Activated T-helper 1 cell treated with anti-CD3 and anti-CD28 coated beads, Interleukin-12 subunit alpha, Interleukin-12 subunit beta, Interleukin-2, Interleukin-4 antibody, amounts not matched to agents 30 ng/mL and 10 ng/mL and 1 ng/mL, durations not matched to agents 14 hours and 24 hours and 36 hours (primary cell): ENCODE measurements at regions of chr1 and their contacts with region 1.

Region 1: DNA sequence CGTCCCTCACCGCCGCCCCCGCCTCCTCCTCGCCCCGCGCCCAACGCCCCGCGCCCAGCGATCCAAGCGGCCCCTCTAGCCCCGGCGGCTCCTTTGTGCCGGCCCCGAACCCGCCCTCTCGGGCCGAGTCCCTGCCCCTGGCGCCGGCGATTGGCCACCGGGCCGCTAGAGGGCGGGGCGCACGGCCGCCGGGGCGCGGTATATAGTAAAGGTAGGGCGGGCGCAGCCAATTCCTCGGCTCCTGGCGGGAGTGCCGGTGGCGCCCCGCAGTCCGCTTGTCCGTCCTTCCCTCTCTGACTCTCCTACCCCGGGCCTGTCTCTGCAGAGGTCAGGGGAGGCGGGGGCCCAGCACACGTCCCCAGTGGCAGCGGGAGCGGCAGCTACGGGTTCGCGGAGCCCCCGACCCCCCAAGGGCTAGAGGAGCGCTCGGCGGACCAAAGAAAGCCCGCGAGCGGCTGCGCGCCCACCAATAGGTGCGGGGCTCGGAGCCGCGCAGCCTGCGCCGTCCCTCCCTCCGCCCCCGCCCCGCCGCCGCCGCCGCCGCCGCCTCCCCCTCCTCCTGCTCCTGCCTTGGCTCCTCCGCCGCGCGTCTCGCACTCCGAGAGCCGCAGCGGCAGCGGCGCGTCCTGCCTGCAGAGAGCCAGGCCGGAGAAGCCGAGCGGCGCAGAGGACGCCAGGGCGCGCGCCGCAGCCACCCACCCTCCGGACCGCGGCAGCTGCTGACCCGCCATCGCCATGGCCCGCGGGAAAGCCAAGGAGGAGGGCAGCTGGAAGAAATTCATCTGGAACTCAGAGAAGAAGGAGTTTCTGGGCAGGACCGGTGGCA is at the start of gene ATP1B1:
- DNase-seq: peak; percentile 81
- H3K4me3 Mint-ChIP-seq: peak within 1 kb of the TSS; percentile 89
- H3K27ac Mint-ChIP-seq: peak within 1 kb of the TSS; percentile 80
- H3K4me1 Mint-ChIP-seq: peaks cover 51% of the 10 kb centered on the region
- H3K27me3 Mint-ChIP-seq: peaks cover 5% of the 10 kb centered on the region
- total RNA-seq, gene ATP1B1: 12.3 TPM in 2 replicates

Region 2: DNA sequence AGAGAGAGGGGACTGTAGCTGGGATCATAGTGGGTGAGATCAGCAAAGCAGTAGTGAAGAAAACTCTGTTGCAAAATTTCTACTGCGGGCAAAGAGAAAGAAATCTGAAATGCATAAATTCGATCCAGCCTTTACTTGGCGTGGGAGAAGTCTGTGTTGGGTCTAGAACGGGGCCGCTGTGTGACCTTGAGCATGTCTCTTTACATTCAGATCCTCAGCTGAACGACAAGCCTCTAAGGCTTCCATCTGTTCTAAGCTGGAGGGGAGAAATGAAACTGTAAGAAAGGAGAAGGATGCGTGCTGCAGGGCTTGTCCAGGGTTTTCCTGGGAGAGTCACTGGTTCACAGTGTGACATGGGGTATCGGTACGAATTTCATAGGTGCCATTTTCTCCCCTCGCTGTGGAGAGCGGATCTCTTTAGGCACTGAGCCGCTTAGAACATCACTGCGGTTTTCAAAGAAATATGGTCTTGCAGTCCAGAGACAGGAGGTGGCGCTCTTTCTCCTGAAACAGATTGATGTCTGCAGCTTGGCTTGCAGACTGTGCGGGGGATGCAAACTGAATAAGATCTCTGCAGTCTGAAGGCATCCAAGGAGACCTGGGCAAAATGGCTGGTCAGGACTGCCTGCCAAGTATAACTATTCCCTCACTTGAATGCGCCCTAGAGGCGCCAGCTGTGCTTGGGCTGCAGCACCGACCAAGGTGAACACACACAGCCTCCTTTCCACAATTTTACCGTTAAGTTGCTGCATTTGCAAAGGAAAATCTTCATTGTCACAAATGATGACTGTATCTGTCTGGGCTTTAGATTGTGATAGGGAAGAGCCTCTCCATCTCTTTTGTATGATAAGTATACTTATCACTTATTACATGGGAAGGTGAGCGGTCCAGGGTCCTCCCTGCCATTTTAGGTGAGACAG is 666.6 kb before region 1 on chr1:
- intact Hi-C with region 1: loop called (anchors 10 kb)
- DNase-seq: peak; percentile 78
- H3K4me3 Mint-ChIP-seq: peak overlapping the region; percentile 57
- H3K27ac Mint-ChIP-seq: no peak overlapping the region
- H3K4me1 Mint-ChIP-seq: peaks cover 52% of the 10 kb centered on the region
- H3K27me3 Mint-ChIP-seq: no peaks in the 10 kb centered on the region

Region 3: DNA sequence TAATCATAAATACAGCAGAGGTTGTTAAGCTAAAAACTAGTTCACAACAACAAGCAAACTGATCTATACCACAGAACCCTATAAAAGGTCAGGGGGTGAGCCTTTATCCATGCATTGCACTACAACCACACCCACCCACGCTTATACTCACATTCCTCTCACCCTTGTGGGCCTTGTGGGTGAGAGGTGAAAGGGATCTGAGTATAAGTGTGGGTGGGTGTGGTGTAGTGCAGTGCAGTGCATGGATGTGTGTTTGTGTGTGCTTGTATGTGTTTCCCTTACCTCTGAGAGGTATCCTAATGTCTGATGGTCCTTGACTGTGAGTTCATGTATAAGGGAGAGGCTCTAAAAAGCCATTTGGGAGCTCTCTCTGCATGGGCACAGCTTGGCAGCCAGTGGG is 281.9 kb before region 1 on chr1:
- intact Hi-C with region 1: loop called (anchors 5 kb)
- DNase-seq: no peak
- H3K4me3 Mint-ChIP-seq: no peak overlapping the region
- H3K27ac Mint-ChIP-seq: no peak overlapping the region
- H3K4me1 Mint-ChIP-seq: peaks cover 13% of the 10 kb centered on the region
- H3K27me3 Mint-ChIP-seq: peaks cover 6% of the 10 kb centered on the region

Region 4: GRCh38 chr1:169048043-169048442 is 58.3 kb before region 1 on chr1:
- intact Hi-C with region 1: loop called (anchors 2 kb)
- DNase-seq: no peak
- H3K4me3 Mint-ChIP-seq: peak overlapping the region; percentile 23
- H3K27ac Mint-ChIP-seq: peak overlapping the region; percentile 69
- H3K4me1 Mint-ChIP-seq: peaks cover 73% of the 10 kb centered on the region
- H3K27me3 Mint-ChIP-seq: no peaks in the 10 kb centered on the region

Region 5: DNA sequence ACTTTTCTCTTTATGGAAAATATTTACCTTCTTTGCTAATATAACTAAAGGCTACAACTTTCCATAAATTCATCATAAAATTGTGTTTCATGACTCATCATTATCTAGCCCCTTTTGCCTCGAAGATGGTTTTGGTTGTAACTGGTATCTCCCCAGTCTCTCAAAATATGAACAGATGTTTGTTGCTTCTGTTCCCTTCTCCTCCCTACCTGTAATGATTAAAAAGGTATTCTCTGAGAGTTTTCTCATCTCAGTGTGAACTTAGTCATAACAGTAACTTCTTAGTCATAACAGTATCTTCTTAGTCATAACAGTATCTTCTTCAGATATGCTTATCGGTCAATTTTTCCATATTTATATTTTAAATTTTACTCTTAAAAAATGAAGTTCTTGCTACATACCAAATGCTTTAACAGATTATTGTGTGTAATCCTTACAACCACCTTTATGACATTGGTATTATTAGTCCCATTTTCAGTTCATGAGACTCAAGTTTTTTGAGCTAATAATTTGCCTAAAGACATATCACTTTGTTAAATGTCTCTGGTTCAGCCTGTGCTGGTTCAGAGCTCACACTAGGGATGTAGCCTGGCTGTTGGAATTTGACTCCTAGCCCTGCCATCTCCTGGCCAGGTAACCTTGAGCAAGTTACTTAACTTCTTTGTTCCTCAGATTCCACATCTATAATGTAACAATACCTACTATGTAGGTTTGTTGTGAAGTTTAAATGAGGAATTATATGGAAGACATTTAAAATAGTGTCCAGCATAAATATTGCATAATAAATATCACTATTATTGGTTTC is 32.8 kb after region 1 on chr1:
- intact Hi-C with region 1: loop called (anchors 1 kb)
- DNase-seq: no peak
- H3K4me3 Mint-ChIP-seq: no peak overlapping the region
- H3K27ac Mint-ChIP-seq: peak overlapping the region; percentile 80
- H3K4me1 Mint-ChIP-seq: peaks cover 20% of the 10 kb centered on the region
- H3K27me3 Mint-ChIP-seq: peaks cover 4% of the 10 kb centered on the region

Region 6: GRCh38 chr1:169348383-169349036 is 242.2 kb after region 1 on chr1:
- intact Hi-C with region 1: loop called (anchors 5 kb)
- DNase-seq: no peak
- H3K4me3 Mint-ChIP-seq: no peak overlapping the region
- H3K27ac Mint-ChIP-seq: no peak overlapping the region
- H3K4me1 Mint-ChIP-seq: peaks cover 17% of the 10 kb centered on the region
- H3K27me3 Mint-ChIP-seq: peaks cover 2% of the 10 kb centered on the region